CD4-positive, alpha-beta T cell (primary cell): ENCODE measurements at regions of chr7 and their contacts with region 1.

Region 1: GRCh38 chr7:44885394-44886317 is at the start of gene PURB:
- DNase-seq: peak; percentile 93 to 100 (median 96)
- ATAC-seq: peak; percentile 88
- H3K4me3 ChIP-seq: peak within 1 kb of the TSS; percentile 68
- H3K4me3 Mint-ChIP-seq: peak within 1 kb of the TSS; percentile 87
- H3K27ac ChIP-seq: peak within 1 kb of the TSS; percentile 96 to 97
- H3K27ac Mint-ChIP-seq: peak within 1 kb of the TSS; percentile 100
- H3K4me1 ChIP-seq: peaks cover 32% of the 10 kb centered on the region
- H3K4me1 Mint-ChIP-seq: peaks cover 43% of the 10 kb centered on the region
- H3K27me3 ChIP-seq: no peaks in the 10 kb centered on the region
- H3K27me3 Mint-ChIP-seq: no peaks in the 10 kb centered on the region
- CTCF ChIP-seq: no peak
- total RNA-seq, gene PURB: 17.0 to 17.4 TPM

Region 2: GRCh38 chr7:44573464-44574286 is 312.0 kb before region 1 on chr7 and contains the start of gene DDX56:
- CTCF ChIA-PET with region 1: no interaction called
- POLR2A ChIA-PET with region 1: interaction called, 10 read pairs
- intact Hi-C with region 1: no loop called
- DNase-seq: peak; percentile 83 to 97 (median 90)
- ATAC-seq: peak; percentile 96
- H3K4me3 ChIP-seq: peak within 1 kb of the TSS; percentile 71
- H3K4me3 Mint-ChIP-seq: peak within 1 kb of the TSS; percentile 95
- H3K27ac ChIP-seq: peak within 1 kb of the TSS; percentile 77 to 82
- H3K27ac Mint-ChIP-seq: peak within 1 kb of the TSS; percentile 99
- H3K4me1 ChIP-seq: peaks cover 35% of the 10 kb centered on the region
- H3K4me1 Mint-ChIP-seq: peaks cover 48% of the 10 kb centered on the region
- H3K27me3 ChIP-seq: no peaks in the 10 kb centered on the region
- H3K27me3 Mint-ChIP-seq: no peaks in the 10 kb centered on the region
- CTCF ChIP-seq: no peak
- total RNA-seq, gene DDX56: 126 to 127 TPM

Region 3: DNA sequence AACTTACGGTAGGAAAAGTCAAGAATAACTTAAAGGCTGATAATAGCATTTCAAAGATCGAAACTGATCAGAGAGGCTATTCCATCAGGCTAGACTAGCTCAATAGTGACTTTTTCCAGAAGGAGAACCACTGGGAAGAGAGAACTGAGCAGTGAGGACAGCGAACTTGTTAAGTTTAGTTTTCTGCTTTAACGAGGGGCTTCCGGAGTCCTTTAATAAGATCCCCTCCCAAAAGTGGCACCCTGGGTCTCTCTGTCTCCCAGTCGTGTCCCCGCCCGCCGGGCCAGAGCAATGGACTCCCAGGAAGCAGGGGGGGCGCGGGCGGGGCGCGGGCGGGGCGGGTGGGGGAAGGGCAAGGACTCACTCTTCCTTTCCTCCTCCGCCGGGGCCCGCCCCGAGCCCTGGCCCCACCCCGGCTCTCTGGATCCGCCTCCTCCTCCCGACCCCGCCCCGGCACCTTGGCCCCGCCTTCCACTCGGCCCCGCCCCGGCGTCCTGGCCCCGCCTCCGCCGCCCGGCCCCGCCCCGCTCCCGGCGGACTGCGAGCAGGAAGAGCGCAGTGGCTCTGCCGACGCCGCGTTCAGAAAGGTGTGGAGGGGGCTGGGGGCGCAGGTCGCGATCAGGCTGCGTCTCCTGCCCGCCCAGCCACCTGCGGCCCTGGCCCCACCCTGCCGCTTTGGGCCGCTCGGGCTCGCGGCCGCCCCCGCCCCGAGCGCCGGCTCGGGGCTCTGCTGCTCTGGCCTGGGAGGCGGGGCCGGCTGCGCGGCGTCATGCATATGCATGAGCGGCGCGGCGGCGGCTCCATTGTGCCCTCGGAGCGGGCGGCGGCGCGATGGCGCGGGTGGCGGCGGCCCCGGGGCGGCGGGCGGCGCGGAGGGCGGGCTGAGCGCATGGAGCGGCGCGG is 137.4 kb before region 1 on chr7 and contains the start of gene ZMIZ2:
- CTCF ChIA-PET with region 1: no interaction called
- POLR2A ChIA-PET with region 1: interaction called, 10 read pairs
- intact Hi-C with region 1: no loop called
- DNase-seq: peak; percentile 85 to 97 (median 92)
- ATAC-seq: peak; percentile 85
- H3K4me3 ChIP-seq: peak within 1 kb of the TSS; percentile 87
- H3K4me3 Mint-ChIP-seq: peak within 1 kb of the TSS; percentile 84
- H3K27ac ChIP-seq: peak within 1 kb of the TSS; percentile 70 to 75
- H3K27ac Mint-ChIP-seq: peak within 1 kb of the TSS; percentile 86
- H3K4me1 ChIP-seq: peaks cover 37% of the 10 kb centered on the region
- H3K4me1 Mint-ChIP-seq: peaks cover 43% of the 10 kb centered on the region
- H3K27me3 ChIP-seq: no peaks in the 10 kb centered on the region
- H3K27me3 Mint-ChIP-seq: no peaks in the 10 kb centered on the region
- CTCF ChIP-seq: no peak
- total RNA-seq, gene ZMIZ2: 81.5 to 82.0 TPM

Region 4: GRCh38 chr7:44875241-44875640 is 10.4 kb before region 1 on chr7:
- CTCF ChIA-PET with region 1: no interaction called
- POLR2A ChIA-PET with region 1: interaction called, 13 read pairs
- intact Hi-C with region 1: no loop called
- DNase-seq: no peak
- ATAC-seq: no peak
- H3K4me3 ChIP-seq: no peak overlapping the region
- H3K4me3 Mint-ChIP-seq: no peak overlapping the region
- H3K27ac ChIP-seq: no peak overlapping the region
- H3K27ac Mint-ChIP-seq: no peak overlapping the region
- H3K4me1 ChIP-seq: no peaks in the 10 kb centered on the region
- H3K4me1 Mint-ChIP-seq: peaks cover 15% of the 10 kb centered on the region
- H3K27me3 ChIP-seq: no peaks in the 10 kb centered on the region
- H3K27me3 Mint-ChIP-seq: no peaks in the 10 kb centered on the region
- CTCF ChIP-seq: no peak

Region 5: DNA sequence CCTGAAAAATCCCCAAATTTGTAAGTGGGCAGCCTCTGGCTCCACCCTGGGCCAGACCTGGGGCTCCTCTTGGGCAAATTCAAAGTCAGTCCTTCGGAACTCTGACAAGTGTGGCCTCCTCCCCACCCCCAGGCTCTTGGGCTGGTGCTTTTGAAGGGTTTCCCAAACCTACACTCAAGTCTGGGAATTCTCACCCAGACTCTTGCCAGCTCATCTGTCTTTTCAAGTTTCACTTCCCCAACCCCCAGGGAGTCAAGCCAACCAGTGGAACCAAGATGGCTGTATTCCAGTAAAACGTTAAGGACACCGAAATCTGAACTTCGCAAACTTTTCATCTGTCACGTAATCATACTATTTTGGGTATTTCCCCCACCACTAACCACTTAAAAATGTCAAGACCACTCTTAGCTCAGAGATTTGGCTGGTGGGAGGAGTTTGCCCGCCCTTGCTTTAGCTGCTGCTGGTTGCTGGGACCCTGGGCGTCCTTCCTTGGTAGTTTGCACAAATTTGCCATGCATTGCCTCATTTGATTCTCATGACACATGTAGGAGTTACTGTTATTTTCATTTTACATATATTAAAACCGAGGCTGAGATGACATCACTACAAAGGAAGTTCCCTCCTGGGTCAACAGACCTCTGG is 94.9 kb after region 1 on chr7:
- CTCF ChIA-PET with region 1: no interaction called
- POLR2A ChIA-PET with region 1: interaction called, 12 read pairs
- intact Hi-C with region 1: no loop called
- DNase-seq: peak in 6 of 14 experiments; percentile 45 to 91 (median 72)
- ATAC-seq: peak; percentile 19
- H3K4me3 ChIP-seq: no peak overlapping the region
- H3K4me3 Mint-ChIP-seq: peak overlapping the region; percentile 79
- H3K27ac ChIP-seq: peak overlapping the region; percentile 90 to 92
- H3K27ac Mint-ChIP-seq: peak overlapping the region; percentile 95
- H3K4me1 ChIP-seq: peaks cover 90% of the 10 kb centered on the region
- H3K4me1 Mint-ChIP-seq: peaks cover 90% of the 10 kb centered on the region
- H3K27me3 ChIP-seq: no peaks in the 10 kb centered on the region
- H3K27me3 Mint-ChIP-seq: no peaks in the 10 kb centered on the region
- CTCF ChIP-seq: no peak

Region 6: GRCh38 chr7:45111298-45112223 is 225.9 kb after region 1 on chr7 and contains the start of gene TBRG4:
- CTCF ChIA-PET with region 1: no interaction called
- POLR2A ChIA-PET with region 1: interaction called, 22 read pairs
- intact Hi-C with region 1: loop called in 1 of 2 experiments (anchors 2 kb)
- DNase-seq: peak; percentile 86 to 98 (median 91)
- ATAC-seq: peak; percentile 78
- H3K4me3 ChIP-seq: peak within 1 kb of the TSS; percentile 94
- H3K4me3 Mint-ChIP-seq: peak within 1 kb of the TSS; percentile 98
- H3K27ac ChIP-seq: peak within 1 kb of the TSS; percentile 99
- H3K27ac Mint-ChIP-seq: peak within 1 kb of the TSS; percentile 96
- H3K4me1 ChIP-seq: peaks cover 51% of the 10 kb centered on the region
- H3K4me1 Mint-ChIP-seq: peaks cover 55% of the 10 kb centered on the region
- H3K27me3 ChIP-seq: no peaks in the 10 kb centered on the region
- H3K27me3 Mint-ChIP-seq: peaks cover 9% of the 10 kb centered on the region
- CTCF ChIP-seq: no peak
- total RNA-seq, gene TBRG4: 104 to 105 TPM

Region 7: DNA sequence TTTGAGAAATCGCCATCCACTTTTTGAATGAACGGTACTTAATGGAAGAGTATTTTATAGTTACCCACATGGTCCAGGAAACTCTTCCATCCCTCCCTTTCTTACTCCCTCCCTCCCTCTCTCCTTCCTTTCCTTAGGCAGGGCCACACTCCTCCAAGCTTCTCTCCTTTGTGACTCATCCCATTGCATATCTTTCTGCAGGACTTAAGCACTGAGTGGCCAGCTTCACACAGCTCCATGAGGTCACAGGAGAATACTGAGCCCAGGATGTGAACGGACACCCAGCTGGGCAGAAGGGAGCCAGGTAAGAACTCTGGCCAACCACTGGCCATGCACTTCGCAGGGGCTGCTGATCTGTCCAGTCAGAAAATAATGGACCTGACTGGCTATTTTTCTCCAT is 498.8 kb after region 1 on chr7:
- CTCF ChIA-PET with region 1: no interaction called
- POLR2A ChIA-PET with region 1: no interaction called
- intact Hi-C with region 1: no loop called
- DNase-seq: no peak
- ATAC-seq: no peak
- H3K4me3 ChIP-seq: no peak overlapping the region
- H3K4me3 Mint-ChIP-seq: no peak overlapping the region
- H3K27ac ChIP-seq: no peak overlapping the region
- H3K27ac Mint-ChIP-seq: no peak overlapping the region
- H3K4me1 ChIP-seq: no peaks in the 10 kb centered on the region
- H3K4me1 Mint-ChIP-seq: no peaks in the 10 kb centered on the region
- H3K27me3 ChIP-seq: peaks cover 6 to 7% of the 10 kb centered on the region in 2 experiments
- H3K27me3 Mint-ChIP-seq: peaks cover 14% of the 10 kb centered on the region
- CTCF ChIP-seq: no peak